ENCODE measurements at regions of chr13 and their contacts with region 1.

Region 1: DNA sequence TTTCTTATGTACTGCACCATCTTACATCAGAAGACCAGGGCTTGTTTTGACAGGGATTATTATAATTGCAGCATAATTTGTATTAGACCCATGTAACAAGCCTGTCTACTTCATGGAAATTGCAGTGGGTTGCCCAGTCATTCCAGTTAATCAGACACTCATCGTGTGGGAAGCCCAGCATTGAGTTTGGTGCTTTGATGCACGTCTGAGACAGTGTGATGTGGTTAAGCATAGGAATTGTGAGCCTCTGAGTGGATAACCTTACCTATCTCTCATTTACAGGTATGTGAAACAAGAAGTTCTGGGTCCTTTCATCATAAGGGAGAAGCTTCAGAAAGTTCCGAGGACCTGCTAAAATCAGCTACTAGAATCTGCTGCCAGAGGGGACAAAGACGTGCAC is 12.8 kb downstream of the RGCC start:
- DNase-seq: no peak
- H3K4me3 Mint-ChIP-seq: no peak overlapping the region
- H3K27ac Mint-ChIP-seq: no peak overlapping the region
- H3K4me1 Mint-ChIP-seq: peaks cover 12% of the 10 kb centered on the region
- H3K27me3 Mint-ChIP-seq: no peaks in the 10 kb centered on the region
- CTCF ChIP-seq: no peak

Region 2: GRCh38 chr13:41458761-41459431 is 11.3 kb before region 1 on chr13:
- CTCF ChIA-PET with region 1: interaction called, 10 read pairs
- POLR2A ChIA-PET with region 1: interaction called, 5 read pairs
- intact Hi-C with region 1: no loop called
- DNase-seq: peak; percentile 56
- H3K4me3 Mint-ChIP-seq: peak overlapping the region; percentile 67
- H3K27ac Mint-ChIP-seq: no peak overlapping the region
- H3K4me1 Mint-ChIP-seq: peaks cover 12% of the 10 kb centered on the region
- H3K27me3 Mint-ChIP-seq: no peaks in the 10 kb centered on the region
- CTCF ChIP-seq: peak; percentile 57

Region 3: DNA sequence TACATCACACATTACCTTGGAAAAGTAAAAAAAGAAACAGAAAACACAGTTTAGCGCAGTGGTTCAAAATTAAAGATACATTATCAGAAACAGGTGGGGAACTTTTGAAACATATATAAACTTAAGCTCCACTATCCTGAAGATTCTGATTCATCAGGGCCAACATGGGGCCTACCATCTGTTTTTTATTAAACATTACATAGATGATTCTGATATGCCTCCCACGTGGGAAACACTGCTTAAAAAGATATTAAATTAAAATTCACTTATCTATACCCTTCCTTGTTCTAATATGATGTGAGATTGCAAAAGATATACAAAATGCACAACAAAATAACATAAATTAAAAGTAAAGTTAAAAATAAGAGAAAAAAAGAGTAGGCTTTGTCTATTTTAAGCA is 365.7 kb after region 1 on chr13:
- CTCF ChIA-PET with region 1: no interaction called
- POLR2A ChIA-PET with region 1: no interaction called
- intact Hi-C with region 1: no loop called
- DNase-seq: no peak
- H3K4me3 Mint-ChIP-seq: no peak overlapping the region
- H3K27ac Mint-ChIP-seq: no peak overlapping the region
- H3K4me1 Mint-ChIP-seq: no peaks in the 10 kb centered on the region
- H3K27me3 Mint-ChIP-seq: no peaks in the 10 kb centered on the region
- CTCF ChIP-seq: no peak

Measured in MCF 10A (cell line).